ENCODE measurements at regions of chr5 and their contacts with region 1.

Region 1: DNA sequence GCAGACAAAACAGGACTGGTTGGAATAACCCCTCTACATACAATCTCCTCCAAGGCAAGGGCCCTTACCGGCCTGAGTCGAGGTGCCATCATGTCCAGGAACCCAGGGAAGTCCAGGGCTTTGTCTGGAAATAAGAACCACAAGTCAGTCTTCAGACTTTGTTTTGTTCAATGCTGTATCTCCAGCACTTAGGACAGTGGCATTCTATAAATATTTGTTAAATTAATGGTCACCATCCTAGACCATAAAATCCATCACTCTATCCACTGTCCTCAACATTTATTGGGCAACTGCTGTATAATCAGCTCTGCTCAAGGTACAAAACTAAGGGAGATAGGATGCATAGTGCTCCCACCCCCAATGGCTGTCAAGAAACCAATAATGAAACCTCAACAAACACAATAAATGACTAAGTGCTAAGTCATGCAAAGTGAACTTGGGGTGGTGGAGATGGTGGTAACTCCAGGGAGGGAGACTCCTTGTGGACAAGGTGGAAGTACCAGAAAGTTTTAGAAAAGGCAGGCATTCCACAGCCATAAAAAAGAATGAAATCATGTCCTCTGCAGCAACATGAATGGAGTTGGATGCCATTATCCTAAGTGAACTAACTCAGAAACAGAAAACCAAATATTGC is 5.0 kb downstream of the RELL2 start:
- DNase-seq: no peak
- ATAC-seq: no peak

Region 2: GRCh38 chr5:141392429-141393198 is 249.1 kb before region 1 on chr5 and contains the start of gene PCDHGA8:
- intact Hi-C with region 1: no loop called
- DNase-seq: no peak
- ATAC-seq: no peak
- total RNA-seq, gene PCDHGA8: 5.3 TPM

Region 3: DNA sequence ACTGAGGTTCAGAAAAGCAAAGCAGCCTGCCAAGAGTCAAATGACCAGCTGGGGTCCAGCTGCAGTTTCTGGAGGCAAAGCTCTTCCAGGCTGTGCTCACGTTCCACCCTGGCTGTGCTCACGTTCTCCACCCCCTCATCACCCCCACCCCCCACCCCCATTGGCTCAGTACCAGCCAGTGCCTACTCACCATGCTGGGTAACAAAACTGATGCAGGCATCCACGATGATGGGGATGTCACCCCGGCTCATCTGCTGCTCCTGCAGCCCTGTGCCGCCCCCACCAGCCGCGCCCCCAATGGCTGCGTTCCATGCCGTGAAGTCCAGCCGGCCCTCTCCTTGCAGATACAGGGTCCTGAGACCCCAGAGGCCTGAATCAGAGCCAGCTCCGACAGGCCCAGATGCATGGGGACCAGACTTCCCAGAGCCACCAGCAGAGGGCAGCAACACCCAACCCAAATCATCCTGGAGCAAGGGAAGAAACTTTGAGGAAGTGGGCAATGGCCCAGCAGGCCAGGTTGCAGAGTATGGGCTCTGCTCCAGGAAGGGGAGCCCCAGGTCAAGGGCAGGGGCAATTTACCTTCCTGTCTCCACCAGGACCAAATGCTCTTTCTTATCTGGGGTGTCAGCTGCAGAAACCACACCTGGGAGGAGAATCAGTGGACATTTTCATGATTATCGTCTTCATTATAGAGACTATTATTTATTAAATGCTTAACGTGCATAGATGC is 23.1 kb after region 1 on chr5:
- intact Hi-C with region 1: loop called (anchors 1 kb)
- DNase-seq: peak; percentile 85
- ATAC-seq: peak; percentile 83

Measured in sciatic nerve (tissue), 2 donors.